Common myeloid progenitor, CD34-positive (primary cell): ENCODE measurements at regions of chr10 and their contacts with region 1.

Region 1: DNA sequence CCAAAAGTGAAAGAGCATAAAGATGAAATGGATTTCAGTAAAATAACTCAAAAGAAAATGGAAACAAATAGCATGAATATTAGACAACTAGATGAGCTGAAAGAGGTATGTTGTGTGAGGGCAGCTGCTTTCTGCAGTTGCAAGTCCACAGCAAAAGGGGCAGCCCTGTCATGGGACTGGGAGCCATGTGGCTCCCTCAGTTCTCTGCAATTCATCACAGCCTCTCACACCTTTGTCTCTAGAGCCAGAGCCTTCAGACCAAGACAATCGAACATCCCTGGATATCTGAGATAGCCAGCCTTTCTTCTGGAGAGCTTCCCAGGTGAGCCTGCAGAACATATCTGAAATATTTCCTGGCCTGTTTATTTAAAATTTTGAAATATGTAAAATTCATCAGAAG is 538.7 kb downstream of the REEP3 start:
- DNase-seq: no peak
- H3K4me3 ChIP-seq: no peak overlapping the region
- H3K27ac ChIP-seq: no peak overlapping the region
- H3K4me1 ChIP-seq: no peaks in the 10 kb centered on the region
- H3K27me3 ChIP-seq: no peaks in the 10 kb centered on the region

Region 2: DNA sequence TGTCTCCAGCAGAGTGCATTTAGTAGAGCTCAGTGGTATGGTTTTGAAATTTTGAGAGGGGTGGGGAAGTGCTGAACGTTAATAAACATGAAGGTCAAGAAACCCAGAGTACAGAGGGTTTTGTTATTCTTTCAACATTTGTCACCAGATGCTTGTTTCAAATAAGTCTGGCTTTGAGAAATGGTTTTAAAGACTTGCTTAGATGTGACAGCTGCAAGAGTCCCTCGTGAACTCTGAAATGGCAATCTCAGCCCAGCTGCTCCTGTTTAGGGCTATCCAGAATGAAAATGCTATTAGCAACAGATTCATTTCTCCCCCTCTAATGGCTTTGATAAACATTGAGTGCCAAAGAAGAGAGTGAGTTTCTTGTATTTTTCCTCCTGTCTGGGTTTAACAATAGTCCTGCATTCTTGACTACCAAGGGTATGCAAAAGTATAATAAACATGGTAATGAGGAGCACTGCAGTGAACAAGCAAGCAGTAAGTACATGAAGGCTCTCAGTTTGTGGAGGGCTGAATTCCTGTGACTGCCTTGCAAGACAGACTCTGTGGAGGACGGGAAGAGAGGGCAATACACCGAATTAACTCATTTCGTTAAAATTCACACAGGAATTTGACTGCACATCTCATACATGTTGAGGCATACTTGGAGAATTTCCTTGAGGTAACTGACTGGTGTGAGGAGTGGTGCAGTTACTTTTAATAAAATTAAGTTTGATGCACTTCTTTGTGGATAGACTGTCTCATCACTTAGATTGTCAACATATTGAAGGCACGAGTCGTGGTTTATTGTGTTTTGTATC is 47.8 kb before region 1 on chr10:
- CTCF ChIA-PET with region 1: no interaction called
- POLR2A ChIA-PET with region 1: no interaction called
- DNase-seq: no peak
- H3K4me3 ChIP-seq: no peak overlapping the region
- H3K27ac ChIP-seq: no peak overlapping the region
- H3K4me1 ChIP-seq: no peaks in the 10 kb centered on the region
- H3K27me3 ChIP-seq: no peaks in the 10 kb centered on the region

Region 3: GRCh38 chr10:64041185-64041988 is 18.5 kb before region 1 on chr10:
- CTCF ChIA-PET with region 1: interaction called, 10 read pairs
- POLR2A ChIA-PET with region 1: no interaction called
- DNase-seq: peak; percentile 84 to 91 (median 88)
- H3K4me3 ChIP-seq: peak overlapping the region in 6 of 7 experiments; percentile 52 to 82 (median 60)
- H3K27ac ChIP-seq: no peak overlapping the region
- H3K4me1 ChIP-seq: peaks cover 0 to 12% (median 11%) of the 10 kb centered on the region in 4 experiments
- H3K27me3 ChIP-seq: peaks cover 0 to 4% (median 0%) of the 10 kb centered on the region in 5 experiments